ENCODE measurements at regions of chr5 and their contacts with region 1.

Region 1: GRCh38 chr5:31303688-31304087 is 110.2 kb downstream of the CDH6 start:
- DNase-seq: no peak
- H3K4me3 ChIP-seq: no peak overlapping the region
- H3K27ac ChIP-seq: no peak overlapping the region
- H3K4me1 ChIP-seq: no peaks in the 10 kb centered on the region
- H3K27me3 ChIP-seq: 0 out of 2 replicates have a peak, but pooled peaks cover 7% of the 10 kb centered on the region
- CTCF ChIP-seq: no peak

Region 2: DNA sequence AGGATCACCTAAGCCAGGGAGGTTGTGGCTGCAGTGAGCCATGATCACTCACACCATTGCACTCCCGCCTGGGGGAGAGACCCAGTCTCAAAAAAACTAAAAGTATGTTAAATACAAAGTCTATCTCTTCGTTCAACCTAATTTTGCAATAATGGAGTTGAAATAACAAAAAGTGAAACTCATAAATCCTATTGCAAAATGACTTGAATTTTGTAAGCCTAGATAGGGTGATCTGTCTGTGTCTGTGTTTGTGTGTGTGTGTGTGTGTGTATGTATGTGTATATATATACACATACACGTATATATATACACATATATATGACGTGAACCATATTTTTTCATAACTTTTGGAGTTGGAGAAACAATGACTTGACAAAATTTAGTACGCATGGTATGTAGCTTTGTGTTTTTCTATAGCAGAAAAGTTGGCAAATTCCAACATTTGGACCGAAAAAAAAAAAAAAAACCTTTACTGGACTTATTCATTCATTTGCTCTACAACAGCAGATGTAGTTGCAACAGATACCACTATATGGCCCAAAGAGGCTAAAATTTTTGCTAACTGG is 187.1 kb before region 1 on chr5:
- CTCF ChIA-PET with region 1: interaction called, 12 read pairs
- POLR2A ChIA-PET with region 1: no interaction called
- intact Hi-C with region 1: no loop called
- DNase-seq: peak in 1 of 2 experiments; percentile 28
- H3K4me3 ChIP-seq: no peak overlapping the region
- H3K27ac ChIP-seq: no peak overlapping the region
- H3K4me1 ChIP-seq: no peaks in the 10 kb centered on the region
- H3K27me3 ChIP-seq: no peaks in the 10 kb centered on the region
- CTCF ChIP-seq: no peak

Region 3: GRCh38 chr5:31329715-31330114 is 26.0 kb after region 1 on chr5:
- CTCF ChIA-PET with region 1: no interaction called
- POLR2A ChIA-PET with region 1: no interaction called
- intact Hi-C with region 1: no loop called
- DNase-seq: no peak
- H3K4me3 ChIP-seq: no peak overlapping the region
- H3K27ac ChIP-seq: no peak overlapping the region
- H3K4me1 ChIP-seq: no peaks in the 10 kb centered on the region
- H3K27me3 ChIP-seq: no peaks in the 10 kb centered on the region
- CTCF ChIP-seq: no peak

Region 4: GRCh38 chr5:31511305-31511704 is 207.6 kb after region 1 on chr5:
- CTCF ChIA-PET with region 1: no interaction called
- POLR2A ChIA-PET with region 1: no interaction called
- intact Hi-C with region 1: no loop called
- DNase-seq: no peak
- H3K4me3 ChIP-seq: no peak overlapping the region
- H3K27ac ChIP-seq: no peak overlapping the region
- H3K4me1 ChIP-seq: no peaks in the 10 kb centered on the region
- H3K27me3 ChIP-seq: no peaks in the 10 kb centered on the region
- CTCF ChIP-seq: no peak

Measured in PC-9 (cell line).